GM12878 (cell line): ENCODE measurements at regions of chrX and their contacts with region 1.

Region 1: GRCh38 chrX:72126539-72127140 is 5.1 kb downstream of the RTL5 start:
- DNase-seq: no peak
- ATAC-seq: peak; percentile 97
- H3K4me3 ChIP-seq: no peak overlapping the region
- H3K27ac ChIP-seq: no peak overlapping the region
- H3K4me1 ChIP-seq: 0 out of 2 replicates have a peak, but pooled peaks cover 2% of the 10 kb centered on the region
- H3K27me3 ChIP-seq: no peaks in the 10 kb centered on the region; a peak in 2 of 4 replicates
- CTCF ChIP-seq: peak; percentile 91 to 97 (median 95)
- EP300 ChIP-seq: no peak
- POLR2A ChIP-seq: no peak
- RAD21 ChIP-seq: peak; percentile 84

Region 2: DNA sequence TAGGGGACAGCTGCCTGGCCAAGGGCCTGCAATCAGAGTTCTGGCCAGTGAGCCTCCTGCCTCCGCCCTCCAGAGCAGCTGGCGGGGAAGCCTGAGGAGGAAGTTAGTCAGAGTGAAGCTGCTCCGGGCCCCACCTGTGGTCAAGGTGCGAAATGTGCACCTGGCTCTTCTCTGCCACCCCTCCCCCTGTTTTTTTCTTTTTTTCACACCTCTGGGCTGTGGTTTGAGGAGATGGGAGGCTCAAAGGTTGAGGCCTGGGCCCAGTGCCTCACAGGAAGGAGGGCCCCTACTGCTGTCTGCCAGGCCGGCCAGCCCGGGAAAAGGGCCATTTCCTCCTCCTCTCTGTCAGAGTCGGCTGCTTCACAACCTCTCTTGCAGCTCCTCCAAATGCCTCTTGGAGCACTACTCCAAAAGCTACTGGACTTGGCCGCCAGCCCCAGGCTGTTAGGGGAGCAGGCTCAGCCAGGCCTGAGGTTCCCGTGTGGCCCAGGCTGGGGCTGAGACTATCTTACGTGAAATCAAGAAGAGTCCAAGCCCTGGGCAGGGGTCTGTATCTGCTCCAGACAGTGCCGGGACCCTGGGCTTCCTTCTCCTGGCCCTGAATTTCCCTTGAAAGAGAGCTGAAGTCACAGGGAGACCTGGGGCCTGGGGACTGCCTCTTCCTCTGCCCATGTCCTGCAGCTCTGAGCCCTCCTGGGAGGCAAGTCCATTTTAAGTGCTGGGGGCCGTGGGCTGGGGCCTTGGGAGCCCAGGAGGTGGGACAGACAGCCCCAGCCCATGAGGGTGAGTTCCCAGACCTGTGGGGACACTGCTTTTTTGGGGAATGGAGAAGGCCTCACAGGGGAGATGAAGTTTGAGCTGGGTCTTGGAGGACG is 503.8 kb before region 1 on chrX:
- CTCF ChIA-PET with region 1: no interaction called
- POLR2A ChIA-PET with region 1: no interaction called
- RAD21 ChIA-PET with region 1: no interaction called
- SMC1A ChIA-PET with region 1: no interaction called
- in situ Hi-C with region 1: no loop called
- intact Hi-C with region 1: no loop called
- DNase-seq: peak; percentile 68
- ATAC-seq: peak; percentile 70
- H3K4me3 ChIP-seq: no peak overlapping the region
- H3K27ac ChIP-seq: peak overlapping the region; percentile 89
- H3K4me1 ChIP-seq: peaks cover 56% of the 10 kb centered on the region
- H3K27me3 ChIP-seq: no peaks in the 10 kb centered on the region
- CTCF ChIP-seq: 0 out of 6 replicates have a peak, but pooled peaks of 1 of the 3 experiments have one; percentile 9
- EP300 ChIP-seq: peak; percentile 98
- POLR2A ChIP-seq: no peak; the same call in 1 of the 2 replicates
- RAD21 ChIP-seq: no peak

Region 3: DNA sequence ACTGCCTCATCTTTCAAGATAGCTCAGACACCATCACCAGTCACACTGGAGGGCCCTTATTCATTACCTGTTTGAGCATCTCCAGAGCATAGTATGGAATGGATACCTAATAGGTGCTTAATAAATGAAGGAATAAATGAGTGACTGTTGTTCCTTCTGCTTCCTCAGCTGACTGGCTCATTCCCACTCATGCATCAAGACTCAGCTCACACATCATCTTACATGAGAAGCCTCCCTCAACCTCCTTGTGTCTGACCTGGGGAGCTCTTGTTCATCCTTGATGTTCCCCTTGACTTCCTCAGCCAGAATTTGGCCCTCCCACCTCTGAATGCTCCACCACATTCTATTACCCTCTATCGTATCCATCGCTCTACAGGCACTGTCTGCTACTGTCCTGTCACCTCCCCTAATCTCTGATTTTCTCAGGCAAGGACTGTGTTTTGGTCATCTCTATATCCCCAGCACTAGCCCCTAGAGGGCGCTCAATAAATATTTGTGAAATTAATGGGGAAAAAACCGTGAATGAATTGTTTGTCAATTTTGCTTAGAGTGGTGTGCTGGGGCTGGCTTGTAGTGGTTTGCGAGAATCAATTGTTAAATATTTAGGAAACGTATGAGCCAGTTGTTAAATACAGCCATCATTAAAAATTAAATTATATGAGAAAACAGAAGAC is 127.7 kb before region 1 on chrX:
- CTCF ChIA-PET with region 1: interaction called, 43 read pairs
- POLR2A ChIA-PET with region 1: no interaction called
- RAD21 ChIA-PET with region 1: interaction called, 5 read pairs
- SMC1A ChIA-PET with region 1: interaction called, 3 read pairs
- in situ Hi-C with region 1: loop called (anchors 5 kb)
- intact Hi-C with region 1: loop called (anchors 1 kb)
- DNase-seq: no peak
- ATAC-seq: peak; percentile 95
- H3K4me3 ChIP-seq: no peak overlapping the region
- H3K27ac ChIP-seq: no peak overlapping the region
- H3K4me1 ChIP-seq: no peaks in the 10 kb centered on the region
- H3K27me3 ChIP-seq: no peaks in the 10 kb centered on the region; a peak in 2 of 4 replicates
- CTCF ChIP-seq: peak; percentile 55 to 76 (median 65); a peak in 5 of 6 replicates
- EP300 ChIP-seq: no peak
- POLR2A ChIP-seq: no peak
- RAD21 ChIP-seq: peak; percentile 65

Region 4: DNA sequence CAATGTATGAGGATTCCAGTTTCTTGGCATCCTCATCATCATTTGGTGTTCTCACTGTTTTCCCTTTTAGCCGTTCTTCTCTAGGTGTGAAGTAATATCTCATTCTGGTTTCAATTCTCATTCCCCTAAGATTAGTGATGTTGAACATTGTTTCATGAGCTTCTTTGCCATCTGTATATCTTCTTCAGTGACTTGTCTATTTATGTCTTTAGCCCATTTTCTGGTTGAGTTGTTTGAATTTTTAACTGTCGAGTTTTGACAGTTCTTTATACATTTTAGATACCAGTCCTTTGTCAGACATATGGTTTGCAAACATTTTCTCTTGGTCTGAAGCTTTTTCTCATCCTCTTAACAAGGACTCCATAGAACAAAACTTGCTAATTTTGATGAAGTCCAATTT is 114.9 kb before region 1 on chrX:
- CTCF ChIA-PET with region 1: interaction called, 81 read pairs
- POLR2A ChIA-PET with region 1: no interaction called
- RAD21 ChIA-PET with region 1: interaction called, 3 read pairs
- SMC1A ChIA-PET with region 1: interaction called, 7 read pairs
- in situ Hi-C with region 1: no loop called
- intact Hi-C with region 1: no loop called
- DNase-seq: no peak
- ATAC-seq: no peak
- H3K4me3 ChIP-seq: no peak overlapping the region
- H3K27ac ChIP-seq: no peak overlapping the region
- H3K4me1 ChIP-seq: no peaks in the 10 kb centered on the region
- H3K27me3 ChIP-seq: no peaks in the 10 kb centered on the region
- CTCF ChIP-seq: no peak
- EP300 ChIP-seq: no peak
- POLR2A ChIP-seq: no peak
- RAD21 ChIP-seq: no peak

Region 5: GRCh38 chrX:72018277-72019112 is 108.1 kb before region 1 on chrX:
- CTCF ChIA-PET with region 1: interaction called, 81 read pairs
- POLR2A ChIA-PET with region 1: interaction called, 3 read pairs
- RAD21 ChIA-PET with region 1: interaction called, 43 read pairs
- SMC1A ChIA-PET with region 1: interaction called, 45 read pairs
- in situ Hi-C with region 1: loop called (anchors 5 kb)
- intact Hi-C with region 1: loop called (anchors 1 kb)
- DNase-seq: no peak
- ATAC-seq: peak; percentile 92
- H3K4me3 ChIP-seq: no peak overlapping the region
- H3K27ac ChIP-seq: no peak overlapping the region
- H3K4me1 ChIP-seq: peaks cover 9% of the 10 kb centered on the region
- H3K27me3 ChIP-seq: no peaks in the 10 kb centered on the region
- CTCF ChIP-seq: peak; percentile 44 to 58 (median 58); a peak in 5 of 6 replicates
- EP300 ChIP-seq: no peak
- POLR2A ChIP-seq: no peak
- RAD21 ChIP-seq: peak; percentile 61

Region 6: DNA sequence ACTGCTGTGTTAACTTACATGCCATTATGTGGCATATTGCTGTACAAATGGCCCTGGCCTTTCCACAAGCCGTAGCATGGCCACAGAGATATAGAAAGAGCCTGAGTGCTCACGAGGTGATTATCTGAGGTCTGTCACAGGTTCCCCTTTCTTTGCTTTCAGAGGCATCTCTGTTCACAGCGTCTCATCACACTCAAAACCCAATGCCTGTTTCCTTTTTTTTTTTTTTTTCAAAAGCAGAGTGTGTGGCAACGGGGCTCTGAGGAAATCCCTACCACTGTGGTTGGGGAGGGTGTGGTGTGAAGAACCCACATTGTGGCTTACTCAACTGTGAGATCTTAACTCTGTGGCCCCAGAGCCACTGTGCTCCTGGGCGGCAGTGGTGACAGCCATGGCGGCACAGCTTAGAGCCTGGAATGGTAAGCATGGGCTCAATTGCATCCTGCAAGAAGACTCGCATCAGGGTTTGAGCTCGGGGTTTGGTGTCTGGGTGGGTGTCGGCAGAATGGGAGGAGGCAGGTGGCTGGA is 25.8 kb before region 1 on chrX:
- CTCF ChIA-PET with region 1: interaction called, 5 read pairs
- POLR2A ChIA-PET with region 1: interaction called, 9 read pairs
- RAD21 ChIA-PET with region 1: interaction called, 6 read pairs
- SMC1A ChIA-PET with region 1: no interaction called
- in situ Hi-C with region 1: no loop called
- intact Hi-C with region 1: loop called (anchors 2 kb)
- DNase-seq: peak; percentile 70
- ATAC-seq: peak; percentile 93
- H3K4me3 ChIP-seq: no peak overlapping the region
- H3K27ac ChIP-seq: no peak overlapping the region
- H3K4me1 ChIP-seq: peaks cover 25% of the 10 kb centered on the region
- H3K27me3 ChIP-seq: no peaks in the 10 kb centered on the region
- CTCF ChIP-seq: no peak
- EP300 ChIP-seq: peak; percentile 49 to 55; a peak in 2 of 4 replicates
- POLR2A ChIP-seq: no peak
- RAD21 ChIP-seq: no peak

Region 7: GRCh38 chrX:72181178-72182125 is 54.8 kb after region 1 on chrX and contains the start of gene PIN4:
- CTCF ChIA-PET with region 1: no interaction called
- POLR2A ChIA-PET with region 1: no interaction called
- RAD21 ChIA-PET with region 1: no interaction called
- SMC1A ChIA-PET with region 1: no interaction called
- in situ Hi-C with region 1: no loop called
- intact Hi-C with region 1: loop called (anchors 5 kb)
- DNase-seq: peak; percentile 88
- ATAC-seq: peak; percentile 97
- H3K4me3 ChIP-seq: peak within 1 kb of the TSS; percentile 84
- H3K27ac ChIP-seq: peak within 1 kb of the TSS; percentile 83
- H3K4me1 ChIP-seq: peaks cover 3% of the 10 kb centered on the region; the same call in 1 of the 2 replicates
- H3K27me3 ChIP-seq: no peaks in the 10 kb centered on the region
- CTCF ChIP-seq: no peak
- EP300 ChIP-seq: no peak
- POLR2A ChIP-seq: peak; percentile 64
- RAD21 ChIP-seq: no peak
- polyA plus RNA-seq, gene PIN4: 46.5 to 53.6 TPM